ENCODE measurements at regions of chr16 and their contacts with region 1.

Region 1: GRCh38 chr16:75138636-75139035 is 9.7 kb upstream of the ZFP1 start:
- DNase-seq: no peak
- ATAC-seq: no peak
- H3K4me3 ChIP-seq: no peak overlapping the region
- H3K27ac ChIP-seq: no peak overlapping the region
- H3K4me1 ChIP-seq: no peaks in the 10 kb centered on the region
- H3K27me3 ChIP-seq: no peaks in the 10 kb centered on the region
- CTCF ChIP-seq: no peak

Region 2: GRCh38 chr16:75402821-75403475 is 264.3 kb after region 1 on chr16:
- CTCF ChIA-PET with region 1: interaction called, 13 read pairs
- POLR2A ChIA-PET with region 1: no interaction called
- intact Hi-C with region 1: no loop called
- DNase-seq: peak; percentile 39
- ATAC-seq: peak; percentile 29; the same call in 1 of the 2 replicates
- H3K4me3 ChIP-seq: no peak overlapping the region
- H3K27ac ChIP-seq: peak overlapping the region; percentile 52; the same call in 1 of the 2 replicates
- H3K4me1 ChIP-seq: peaks cover 11% of the 10 kb centered on the region; the same call in 1 of the 2 replicates
- H3K27me3 ChIP-seq: no peaks in the 10 kb centered on the region
- CTCF ChIP-seq: peak; percentile 63; the same call in 1 of the 2 replicates

Measured in PC-3 (cell line).